Heart right ventricle (tissue), 16 donors: ENCODE measurements at regions of chr16 and their contacts with region 1.

Region 1: GRCh38 chr16:58086426-58087208 is 42.6 kb downstream of the CFAP20 start:
- DNase-seq: no peak
- ATAC-seq: no peak
- H3K4me3 ChIP-seq: no peak overlapping the region
- H3K27ac ChIP-seq: no peak overlapping the region
- H3K4me1 ChIP-seq: peaks cover 0 to 18% (median 4%) of the 10 kb centered on the region in 9 donors
- H3K27me3 ChIP-seq: no peaks in the 10 kb centered on the region
- CTCF ChIP-seq: no peak

Region 2: GRCh38 chr16:58032710-58033293 is 53.8 kb before region 1 on chr16:
- intact Hi-C with region 1: loop called in 1 of 10 experiments (anchors 5 kb)
- DNase-seq: peak; percentile 75 to 77
- ATAC-seq: peak; percentile 57 to 89 (median 78)
- H3K4me3 ChIP-seq: peak overlapping the region in 1 of 10 donors; percentile 1
- H3K27ac ChIP-seq: peak overlapping the region in 9 of 10 donors; percentile 36 to 99 (median 93)
- H3K4me1 ChIP-seq: peaks cover 38 to 98% (median 87%) of the 10 kb centered on the region in 9 donors
- H3K27me3 ChIP-seq: peaks cover 0 to 4% (median 0%) of the 10 kb centered on the region in 7 donors
- CTCF ChIP-seq: no peak

Region 3: GRCh38 chr16:58114827-58115825 is 28.5 kb after region 1 on chr16:
- intact Hi-C with region 1: loop called in 1 of 10 experiments (anchors 5 kb)
- DNase-seq: peak in 1 of 2 donors; percentile 49
- ATAC-seq: peak in 7 of 8 donors; percentile 46 to 82 (median 64)
- H3K4me3 ChIP-seq: peak overlapping the region in 7 of 10 donors; percentile 11 to 47 (median 37)
- H3K27ac ChIP-seq: peak overlapping the region in 9 of 10 donors; percentile 46 to 87 (median 70)
- H3K4me1 ChIP-seq: peaks cover 5 to 75% (median 48%) of the 10 kb centered on the region in 9 donors
- H3K27me3 ChIP-seq: no peaks in the 10 kb centered on the region
- CTCF ChIP-seq: no peak